ENCODE measurements at regions of chr16 and their contacts with region 1.

Region 1: GRCh38 chr16:88881007-88881615 is 14.7 kb upstream of the PABPN1L start:
- DNase-seq: peak; percentile 41
- ATAC-seq: peak; percentile 51
- H3K4me3 Mint-ChIP-seq: no peak overlapping the region
- H3K27ac Mint-ChIP-seq: no peak overlapping the region
- H3K4me1 Mint-ChIP-seq: no peaks in the 10 kb centered on the region
- H3K27me3 Mint-ChIP-seq: no peaks in the 10 kb centered on the region; the same call in 1 of the 2 replicates
- CTCF ChIP-seq: no peak

Region 2: DNA sequence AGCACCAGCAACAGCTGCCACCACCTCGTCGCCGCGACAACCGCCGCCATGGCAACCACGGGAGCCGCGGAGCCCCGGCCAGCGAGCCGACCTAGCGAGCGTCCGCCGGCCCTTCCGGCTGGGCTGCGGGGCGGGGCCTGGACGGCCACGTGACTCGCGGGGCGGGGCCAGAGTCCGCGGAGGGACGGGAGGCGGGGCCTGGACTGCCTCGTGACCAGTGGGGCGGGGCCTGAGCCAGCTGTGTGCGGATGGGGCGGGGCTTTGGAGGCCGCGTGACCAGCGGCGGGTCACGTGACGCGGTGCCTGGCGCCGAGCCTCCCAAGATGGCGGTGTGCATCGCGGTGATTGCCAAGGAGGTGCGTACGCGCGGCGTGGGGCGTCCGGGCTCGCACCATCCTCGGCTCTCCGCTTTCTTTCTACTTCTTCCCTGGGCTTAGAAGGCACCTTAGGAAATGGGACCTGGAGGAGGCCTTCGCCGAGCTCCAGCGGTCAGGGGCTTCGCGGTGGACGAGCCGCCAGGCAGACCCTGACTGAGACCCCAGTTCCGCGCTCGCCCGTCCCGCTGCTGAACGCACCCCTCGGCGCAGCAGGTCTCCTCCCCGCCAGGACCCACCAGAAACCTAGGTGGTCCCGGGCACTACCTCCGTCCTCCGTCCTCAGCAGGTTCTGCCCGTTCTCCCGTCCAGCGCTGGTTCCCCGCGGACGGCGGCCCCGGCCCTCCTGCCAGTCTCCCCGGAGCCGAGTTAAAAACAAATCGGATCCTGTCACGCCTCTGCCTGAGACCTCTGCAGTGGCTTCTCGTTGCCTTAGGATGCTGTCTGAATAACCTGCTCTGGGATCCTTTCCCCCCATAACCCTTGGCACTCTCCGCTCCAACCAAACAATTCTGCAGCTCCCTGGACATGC is 24.0 kb before region 1 on chr16 and contains the starts of genes GALNS and TRAPPC2L:
- CTCF ChIA-PET with region 1: interaction called, 18 read pairs
- POLR2A ChIA-PET with region 1: interaction called, 5 read pairs
- DNase-seq: peak; percentile 99
- ATAC-seq: peak; percentile 88
- H3K4me3 Mint-ChIP-seq: peak within 1 kb of the TSS; percentile 99
- H3K27ac Mint-ChIP-seq: peak within 1 kb of the TSS; percentile 94
- H3K4me1 Mint-ChIP-seq: peaks cover 20% of the 10 kb centered on the region
- H3K27me3 Mint-ChIP-seq: no peaks in the 10 kb centered on the region
- CTCF ChIP-seq: no peak
- total RNA-seq, gene GALNS: 23.0 to 29.5 TPM (median 25.8 TPM) in 3 replicates
- total RNA-seq, gene TRAPPC2L: 63.1 to 82.0 TPM (median 64.5 TPM) in 3 replicates

Region 3: GRCh38 chr16:88925101-88925887 is 44.2 kb after region 1 on chr16:
- CTCF ChIA-PET with region 1: interaction called, 14 read pairs
- POLR2A ChIA-PET with region 1: no interaction called
- DNase-seq: peak; percentile 58
- ATAC-seq: peak; percentile 40
- H3K4me3 Mint-ChIP-seq: no peak overlapping the region
- H3K27ac Mint-ChIP-seq: no peak overlapping the region
- H3K4me1 Mint-ChIP-seq: peaks cover 14% of the 10 kb centered on the region
- H3K27me3 Mint-ChIP-seq: no peaks in the 10 kb centered on the region
- CTCF ChIP-seq: no peak

Region 4: GRCh38 chr16:89009311-89010209 is 128.4 kb after region 1 on chr16:
- CTCF ChIA-PET with region 1: no interaction called
- POLR2A ChIA-PET with region 1: no interaction called
- DNase-seq: peak; percentile 63
- ATAC-seq: peak; percentile 62
- H3K4me3 Mint-ChIP-seq: no peak overlapping the region
- H3K27ac Mint-ChIP-seq: no peak overlapping the region
- H3K4me1 Mint-ChIP-seq: peaks cover 6% of the 10 kb centered on the region; the same call in 1 of the 2 replicates
- H3K27me3 Mint-ChIP-seq: peaks cover 8% of the 10 kb centered on the region
- CTCF ChIP-seq: no peak

Region 5: GRCh38 chr16:89026121-89026612 is 145.1 kb after region 1 on chr16:
- CTCF ChIA-PET with region 1: no interaction called
- POLR2A ChIA-PET with region 1: no interaction called
- DNase-seq: peak; percentile 5
- ATAC-seq: no peak
- H3K4me3 Mint-ChIP-seq: no peak overlapping the region
- H3K27ac Mint-ChIP-seq: no peak overlapping the region
- H3K4me1 Mint-ChIP-seq: no peaks in the 10 kb centered on the region
- H3K27me3 Mint-ChIP-seq: no peaks in the 10 kb centered on the region
- CTCF ChIP-seq: no peak